ENCODE measurements at regions of chr13 and their contacts with region 1.

Region 1: DNA sequence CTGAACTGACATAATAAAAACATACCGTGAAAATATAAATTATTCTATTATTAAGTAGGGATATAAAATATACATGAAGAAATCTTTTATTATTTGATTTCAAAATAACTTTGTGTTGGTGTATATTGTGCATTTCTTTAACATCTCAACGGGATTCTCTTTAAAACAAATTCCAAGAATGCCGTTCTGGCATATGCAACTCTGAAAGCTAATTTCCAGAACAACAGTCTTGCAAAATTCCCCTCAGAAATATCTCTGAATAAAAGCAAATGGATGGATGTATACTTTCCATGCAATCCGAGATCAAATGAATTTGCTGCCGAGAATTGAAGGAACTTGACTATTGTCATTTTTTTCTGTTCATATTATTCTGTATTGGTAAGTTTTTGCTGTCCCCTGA is 1579.8 kb downstream of the PCDH9 start:
- DNase-seq: no peak

Region 2: DNA sequence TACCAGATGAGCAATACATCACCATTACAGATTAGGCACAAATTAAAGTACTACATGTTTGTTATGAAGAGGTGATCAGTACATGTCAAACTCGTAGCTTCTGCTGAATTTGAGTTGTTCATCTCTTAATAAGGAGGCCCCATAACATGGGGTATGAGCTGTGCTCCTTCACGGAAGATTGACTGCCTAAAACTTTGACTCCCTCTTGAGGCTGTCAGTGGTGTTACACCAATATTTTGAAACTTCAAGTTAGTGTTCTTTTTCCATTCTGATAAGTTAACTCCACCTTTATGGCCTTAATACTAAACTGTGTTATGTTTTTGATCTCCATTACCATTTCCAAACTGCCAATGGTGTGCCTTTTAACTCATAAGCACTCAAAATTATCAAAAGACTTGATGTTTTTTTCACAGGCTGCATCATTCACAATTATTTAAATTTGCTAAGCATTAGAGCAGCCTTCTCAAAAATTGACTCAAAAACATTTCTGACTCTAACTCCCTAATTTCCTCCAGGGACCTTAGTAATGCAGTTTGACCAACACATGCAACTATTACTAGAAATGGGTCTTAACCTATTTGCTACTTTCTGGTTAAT is 11.7 kb before region 1 on chr13:
- CTCF ChIA-PET with region 1: interaction called, 10 read pairs
- POLR2A ChIA-PET with region 1: no interaction called
- DNase-seq: peak; percentile 83

Measured in HEK293T (cell line).